ENCODE measurements at regions of chr11 and their contacts with region 1.

Region 1: DNA sequence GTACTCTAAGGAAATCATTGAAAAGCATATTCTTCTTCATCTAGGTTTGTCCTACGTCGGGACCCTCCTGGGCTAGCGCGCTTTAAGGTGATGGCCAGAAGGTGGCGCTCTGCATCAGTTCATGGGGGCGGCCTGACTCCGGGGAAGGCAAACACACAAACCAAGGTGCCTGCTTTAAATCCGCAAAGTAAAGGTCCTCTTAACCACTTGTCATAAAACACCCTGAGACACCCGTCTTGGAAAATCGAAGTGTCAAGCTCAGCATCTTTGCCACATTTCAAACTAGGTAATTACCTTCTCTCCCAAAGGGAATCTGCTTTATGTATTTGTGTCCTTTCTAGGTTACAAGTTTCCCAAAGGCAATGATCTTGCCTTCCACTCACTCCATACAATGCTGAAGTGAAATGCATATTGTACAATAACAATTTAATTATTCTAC is 33.9 kb downstream of the LMO2 start:
- DNase-seq: peak; percentile 58 to 92 (median 80)

Region 2: DNA sequence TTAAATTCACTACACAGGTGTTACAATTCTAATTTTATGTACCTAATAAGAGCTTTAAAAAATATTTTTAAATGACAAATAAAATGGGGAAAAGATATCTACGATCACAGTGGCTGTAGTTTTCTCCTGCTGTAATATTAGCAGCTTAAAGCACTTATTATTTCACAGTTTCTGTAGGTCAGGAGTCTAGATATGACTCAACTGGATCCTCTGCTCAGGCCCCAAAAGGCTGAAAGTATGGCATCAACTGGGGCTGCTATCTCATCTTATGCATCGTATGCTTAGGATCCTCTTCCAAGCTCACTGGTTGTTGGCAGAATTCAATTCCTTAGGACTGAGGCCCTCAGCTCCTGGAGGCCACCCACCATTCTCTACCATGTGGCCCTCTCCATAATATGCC is 96.5 kb before region 1 on chr11:
- intact Hi-C with region 1: no loop called
- DNase-seq: no peak

Region 3: DNA sequence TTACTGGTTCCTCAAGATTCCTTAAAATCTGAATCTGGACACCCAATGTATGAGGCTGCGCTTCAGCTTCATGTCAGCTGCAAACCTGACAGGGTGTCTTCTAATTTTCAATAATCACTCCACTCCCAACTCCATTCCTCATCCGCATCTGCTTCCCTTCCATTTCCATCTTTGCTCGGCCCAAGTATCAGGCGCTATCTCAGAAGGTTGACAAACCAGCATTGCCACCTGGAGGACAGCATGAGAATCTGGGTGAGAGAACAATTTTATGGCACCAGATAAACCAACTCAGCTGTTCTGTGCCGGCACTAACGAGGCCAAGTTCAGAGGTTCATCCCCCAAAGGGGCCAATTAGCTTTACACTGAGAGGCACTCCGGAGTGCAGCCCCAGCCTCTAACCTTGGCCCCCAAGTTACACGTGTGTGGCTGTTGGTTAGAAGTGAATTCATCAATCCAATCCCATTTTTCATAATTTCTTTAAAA is 113.1 kb after region 1 on chr11:
- intact Hi-C with region 1: loop called (anchors 5 kb)
- DNase-seq: peak in 41 of 42 donors; percentile 13 to 86 (median 55)